A673 (cell line): ENCODE measurements at regions of chr9 and their contacts with region 1.

Region 1: GRCh38 chr9:37592108-37592951 is at the start of gene TOMM5:
- DNase-seq: peak; percentile 96
- H3K4me3 ChIP-seq: peak within 1 kb of the TSS; percentile 89
- H3K27ac ChIP-seq: peak within 1 kb of the TSS; percentile 91
- H3K4me1 ChIP-seq: peaks cover 12% of the 10 kb centered on the region
- H3K27me3 ChIP-seq: no peaks in the 10 kb centered on the region
- CTCF ChIP-seq: no peak
- total RNA-seq, gene TOMM5: 213 and 247 TPM in 2 replicates

Region 2: GRCh38 chr9:37575921-37576721 is 16.2 kb before region 1 on chr9 and contains the start of gene FBXO10:
- CTCF ChIA-PET with region 1: interaction called, 12 read pairs
- POLR2A ChIA-PET with region 1: interaction called, 18 read pairs
- intact Hi-C with region 1: no loop called
- DNase-seq: peak; percentile 71
- H3K4me3 ChIP-seq: peak within 1 kb of the TSS; percentile 81
- H3K27ac ChIP-seq: peak within 1 kb of the TSS; percentile 87
- H3K4me1 ChIP-seq: peaks cover 19% of the 10 kb centered on the region
- H3K27me3 ChIP-seq: no peaks in the 10 kb centered on the region
- CTCF ChIP-seq: no peak
- total RNA-seq, gene FBXO10: 14.5 and 15.0 TPM in 2 replicates

Region 3: DNA sequence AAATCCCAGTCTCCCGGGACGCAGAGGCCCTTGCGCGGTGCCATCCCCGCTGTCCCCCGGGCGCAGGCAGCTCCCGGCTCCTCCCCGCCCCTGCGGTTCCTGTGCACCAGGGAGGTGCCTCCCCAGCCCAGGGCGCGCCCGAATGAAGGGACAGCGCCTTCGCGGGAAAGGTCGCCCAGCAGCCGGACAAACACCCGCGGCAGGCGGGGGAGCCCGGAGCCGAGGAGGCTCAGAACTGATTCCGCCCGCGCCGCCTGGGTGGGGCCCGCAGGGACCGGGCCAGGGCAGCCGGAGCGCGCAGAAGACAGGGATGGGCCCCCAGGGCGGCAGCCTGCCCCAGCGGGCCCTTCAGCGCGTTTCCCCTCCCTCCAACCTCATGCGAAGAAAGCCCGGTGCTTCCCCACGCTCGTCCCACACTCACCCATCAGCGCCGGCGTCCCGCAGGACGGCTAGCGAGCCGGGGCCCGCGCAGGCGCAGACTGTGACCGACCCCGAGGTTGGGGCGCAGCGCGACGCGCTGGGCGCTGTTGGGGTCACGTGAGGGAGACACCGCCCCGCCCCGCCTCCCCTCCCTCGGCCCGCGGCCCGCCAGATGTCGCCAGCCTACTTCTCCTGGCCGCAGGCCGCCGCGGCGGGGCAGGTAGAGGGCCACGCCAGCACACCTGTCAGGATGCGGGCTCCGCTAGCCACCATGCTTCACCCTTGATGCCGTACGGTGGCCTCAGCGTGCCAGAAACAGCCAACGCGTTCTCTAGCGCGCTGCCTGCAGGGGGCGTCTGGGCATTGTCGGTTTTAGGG is 311.5 kb after region 1 on chr9 and contains the start of gene SLC25A51:
- CTCF ChIA-PET with region 1: no interaction called
- POLR2A ChIA-PET with region 1: no interaction called
- intact Hi-C with region 1: loop called (anchors 10 kb)
- DNase-seq: peak; percentile 94
- H3K4me3 ChIP-seq: peak within 1 kb of the TSS; percentile 70
- H3K27ac ChIP-seq: peak within 1 kb of the TSS; percentile 63
- H3K4me1 ChIP-seq: peaks cover 6% of the 10 kb centered on the region
- H3K27me3 ChIP-seq: no peaks in the 10 kb centered on the region
- CTCF ChIP-seq: peak; percentile 98
- total RNA-seq, gene SLC25A51: 36.3 and 40.8 TPM in 2 replicates